ENCODE measurements at regions of chr1 and their contacts with region 1.

Region 1: GRCh38 chr1:199691540-199691939 is 336.0 kb upstream of the NR5A2 start:
- DNase-seq: no peak
- H3K4me3 ChIP-seq: no peak overlapping the region
- H3K27ac ChIP-seq: no peak overlapping the region
- H3K27me3 ChIP-seq: no peaks in the 10 kb centered on the region
- CTCF ChIP-seq: no peak

Region 2: DNA sequence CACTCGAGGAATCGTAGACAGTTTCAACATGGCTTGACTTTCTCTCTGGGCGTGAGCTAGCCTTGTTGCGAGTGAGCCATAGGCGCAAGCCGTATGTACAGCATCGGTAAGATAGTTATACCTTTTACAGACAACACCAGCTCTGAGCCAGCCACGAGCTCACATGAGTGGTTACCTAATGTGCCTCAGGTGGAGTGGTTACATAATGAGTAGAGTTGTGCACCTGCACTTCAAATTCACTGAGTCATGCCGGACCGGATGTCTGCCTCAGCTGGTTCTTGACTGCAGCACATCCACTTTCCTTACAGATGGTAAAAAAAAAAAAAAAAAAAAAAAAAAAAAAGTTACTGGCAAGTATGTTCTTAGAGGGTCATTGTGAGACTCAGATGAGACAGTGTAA is 24.5 kb before region 1 on chr1:
- CTCF ChIA-PET with region 1: interaction called, 12 read pairs
- POLR2A ChIA-PET with region 1: no interaction called
- DNase-seq: no peak
- H3K4me3 ChIP-seq: no peak overlapping the region
- H3K27ac ChIP-seq: no peak overlapping the region
- H3K27me3 ChIP-seq: peaks cover 6% of the 10 kb centered on the region
- CTCF ChIP-seq: no peak

Region 3: GRCh38 chr1:199843861-199844260 is 152.3 kb after region 1 on chr1:
- CTCF ChIA-PET with region 1: no interaction called
- POLR2A ChIA-PET with region 1: no interaction called
- DNase-seq: no peak
- H3K4me3 ChIP-seq: no peak overlapping the region
- H3K27ac ChIP-seq: no peak overlapping the region
- H3K27me3 ChIP-seq: no peaks in the 10 kb centered on the region
- CTCF ChIP-seq: no peak

Measured in AG04450 (cell line).